Vagina (tissue), 2 donors: ENCODE measurements at regions of chr6 and their contacts with region 1.

Region 1: DNA sequence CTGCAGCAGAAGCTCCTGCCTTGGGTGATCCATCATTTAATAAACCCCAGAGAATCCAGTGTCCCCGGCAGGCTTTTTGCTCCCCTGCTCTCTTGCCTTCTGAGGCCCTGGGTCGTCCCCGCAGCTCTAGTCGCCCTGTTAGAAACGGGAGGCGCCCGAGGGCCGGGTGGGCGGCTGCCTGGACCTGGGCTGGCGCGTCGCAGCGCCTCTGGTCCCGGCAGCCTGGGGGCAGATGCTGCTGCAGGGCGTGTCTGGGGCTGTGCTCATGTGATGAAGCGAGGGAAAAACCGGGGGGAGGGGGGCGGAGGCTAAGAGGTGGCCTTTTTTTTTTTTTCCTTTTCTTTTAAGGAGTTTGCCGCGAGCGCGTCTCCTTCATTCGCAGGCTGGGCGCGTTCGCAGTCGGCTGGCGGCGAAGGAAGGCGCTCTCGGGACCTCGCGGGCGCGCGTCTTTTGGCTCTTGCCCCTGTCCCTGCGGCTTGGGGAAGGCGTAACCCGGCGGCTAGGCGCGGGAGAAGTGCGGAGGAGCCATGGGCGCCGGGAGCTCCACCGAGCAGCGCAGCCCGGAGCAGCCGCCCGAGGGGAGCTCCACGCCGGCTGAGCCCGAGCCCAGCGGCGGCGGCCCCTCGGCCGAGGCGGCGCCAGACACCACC is 394 bp downstream of the AKAP12 start:
- DNase-seq: no peak
- H3K4me3 ChIP-seq: peak overlapping the region; percentile 77 to 90
- H3K27ac ChIP-seq: peak overlapping the region; percentile 93
- H3K4me1 ChIP-seq: peaks cover 4% of the 10 kb centered on the region
- H3K27me3 ChIP-seq: no peaks in the 10 kb centered on the region
- CTCF ChIP-seq: no peak
- POLR2A ChIP-seq: peak in 1 of 2 donors; percentile 61

Region 2: GRCh38 chr6:151067684-151068596 is 172.2 kb before region 1 on chr6:
- intact Hi-C with region 1: loop called (anchors 5 kb)
- DNase-seq: peak; percentile 67 to 88
- H3K4me3 ChIP-seq: no peak overlapping the region
- H3K27ac ChIP-seq: peak overlapping the region; percentile 79
- H3K4me1 ChIP-seq: peaks cover 31% of the 10 kb centered on the region
- H3K27me3 ChIP-seq: no peaks in the 10 kb centered on the region
- CTCF ChIP-seq: no peak
- POLR2A ChIP-seq: no peak

Region 3: DNA sequence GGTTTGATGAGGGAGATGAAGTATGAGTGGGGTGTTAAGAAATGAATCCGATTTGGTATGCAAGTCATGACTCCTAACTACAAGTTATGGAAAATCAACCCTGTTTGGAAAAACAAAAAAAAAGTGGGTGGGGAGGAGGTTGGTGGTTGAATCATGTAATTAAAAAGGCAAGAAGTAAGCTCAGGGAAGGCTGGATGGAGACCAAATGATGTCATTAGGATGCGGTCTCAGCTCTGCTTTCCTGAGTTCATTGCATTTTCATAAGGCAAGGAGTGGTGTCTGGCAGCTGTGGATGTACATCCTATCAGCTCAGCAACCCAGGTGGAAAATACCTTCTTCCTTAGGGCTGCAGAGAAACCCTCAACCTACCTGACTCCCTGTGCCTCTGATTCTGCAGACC is 60.8 kb before region 1 on chr6:
- intact Hi-C with region 1: no loop called
- DNase-seq: no peak
- H3K4me3 ChIP-seq: no peak overlapping the region
- H3K27ac ChIP-seq: no peak overlapping the region
- H3K4me1 ChIP-seq: no peaks in the 10 kb centered on the region
- H3K27me3 ChIP-seq: no peaks in the 10 kb centered on the region
- CTCF ChIP-seq: no peak
- POLR2A ChIP-seq: no peak

Region 4: DNA sequence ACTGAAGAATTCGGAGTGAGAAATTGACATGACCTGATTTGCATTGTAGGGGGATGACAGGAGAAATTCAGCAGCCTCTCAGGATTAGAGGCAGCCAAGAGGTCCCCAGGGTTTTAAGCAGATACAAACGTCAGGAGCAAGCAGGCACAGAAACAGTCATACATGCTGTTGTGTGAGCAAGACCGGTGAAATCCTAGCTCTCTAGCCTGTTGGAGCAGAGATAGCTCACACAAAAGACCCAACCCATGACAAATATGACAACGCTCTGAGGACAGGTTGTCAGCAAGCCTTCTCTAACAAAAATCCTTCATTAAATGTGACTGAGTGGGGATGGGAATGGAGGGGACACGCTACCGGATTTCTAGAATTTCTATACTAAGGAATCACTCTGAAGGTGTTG is 23.4 kb before region 1 on chr6:
- intact Hi-C with region 1: no loop called
- DNase-seq: no peak
- H3K4me3 ChIP-seq: no peak overlapping the region
- H3K27ac ChIP-seq: no peak overlapping the region
- H3K4me1 ChIP-seq: no peaks in the 10 kb centered on the region
- H3K27me3 ChIP-seq: no peaks in the 10 kb centered on the region
- CTCF ChIP-seq: no peak
- POLR2A ChIP-seq: no peak

Region 5: GRCh38 chr6:151254451-151255081 is 14.4 kb after region 1 on chr6:
- intact Hi-C with region 1: no loop called
- DNase-seq: no peak
- H3K4me3 ChIP-seq: no peak overlapping the region
- H3K27ac ChIP-seq: no peak overlapping the region
- H3K4me1 ChIP-seq: peaks cover 7% of the 10 kb centered on the region
- H3K27me3 ChIP-seq: no peaks in the 10 kb centered on the region
- CTCF ChIP-seq: no peak
- POLR2A ChIP-seq: no peak